ENCODE measurements at regions of chr19 and their contacts with region 1.

Region 1: GRCh38 chr19:42176990-42177685 is 40.3 kb downstream of the DEDD2 start:
- DNase-seq: peak; percentile 81
- H3K4me3 Mint-ChIP-seq: no peak overlapping the region
- H3K27ac Mint-ChIP-seq: no peak overlapping the region
- H3K4me1 Mint-ChIP-seq: peaks cover 19% of the 10 kb centered on the region
- H3K27me3 Mint-ChIP-seq: peaks cover 30% of the 10 kb centered on the region

Region 2: GRCh38 chr19:42023121-42023942 is 153.8 kb before region 1 on chr19:
- CTCF ChIA-PET with region 1: no interaction called
- POLR2A ChIA-PET with region 1: no interaction called
- DNase-seq: peak; percentile 33
- H3K4me3 Mint-ChIP-seq: no peak overlapping the region
- H3K27ac Mint-ChIP-seq: no peak overlapping the region
- H3K4me1 Mint-ChIP-seq: no peaks in the 10 kb centered on the region
- H3K27me3 Mint-ChIP-seq: peaks cover 6% of the 10 kb centered on the region

Region 3: DNA sequence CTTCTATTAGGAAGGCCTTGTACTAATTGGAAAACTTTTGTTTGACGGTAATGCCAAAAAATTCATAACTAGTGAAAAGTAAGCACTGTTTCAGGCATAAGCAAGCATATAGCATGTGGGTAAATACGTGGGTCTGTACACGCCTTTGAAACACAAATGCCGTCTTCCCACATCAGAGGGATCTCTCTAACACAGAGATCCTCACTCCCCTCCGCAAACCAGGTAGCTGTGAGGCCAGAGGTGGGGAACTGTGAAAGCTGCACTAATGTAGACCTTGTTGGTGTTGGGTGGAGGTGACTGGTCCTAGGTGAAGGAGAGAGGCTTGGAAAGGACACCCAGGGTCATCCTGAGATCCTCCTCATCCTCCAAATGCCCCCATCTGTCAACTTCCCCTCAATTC is 28.9 kb before region 1 on chr19:
- CTCF ChIA-PET with region 1: no interaction called
- POLR2A ChIA-PET with region 1: no interaction called
- DNase-seq: no peak
- H3K4me3 Mint-ChIP-seq: no peak overlapping the region
- H3K27ac Mint-ChIP-seq: no peak overlapping the region
- H3K4me1 Mint-ChIP-seq: peaks cover 3% of the 10 kb centered on the region
- H3K27me3 Mint-ChIP-seq: peaks cover 15% of the 10 kb centered on the region

Region 4: DNA sequence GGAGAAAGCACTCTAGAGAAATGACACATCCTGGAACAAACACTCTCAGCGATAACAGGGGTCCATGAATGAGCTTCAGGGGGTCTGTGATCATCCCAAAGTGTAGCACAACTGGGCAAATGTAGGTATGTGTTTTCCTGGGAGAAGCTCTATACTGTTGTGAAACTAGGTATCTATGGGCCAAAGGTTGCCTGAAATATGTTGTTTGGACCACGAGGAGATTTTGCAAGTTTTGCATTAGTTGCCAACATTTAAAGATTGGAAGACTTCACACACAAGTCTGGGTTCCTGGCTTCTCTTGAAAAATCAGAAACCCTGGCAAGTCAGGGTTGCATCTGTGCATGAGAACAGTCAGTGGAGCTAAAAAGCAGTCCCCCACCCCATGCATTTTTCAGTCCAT is 18.2 kb before region 1 on chr19:
- CTCF ChIA-PET with region 1: interaction called, 11 read pairs
- POLR2A ChIA-PET with region 1: no interaction called
- DNase-seq: no peak
- H3K4me3 Mint-ChIP-seq: no peak overlapping the region
- H3K27ac Mint-ChIP-seq: no peak overlapping the region
- H3K4me1 Mint-ChIP-seq: peaks cover 13% of the 10 kb centered on the region
- H3K27me3 Mint-ChIP-seq: peaks cover 13% of the 10 kb centered on the region

Region 5: GRCh38 chr19:42166316-42166715 is 10.8 kb before region 1 on chr19:
- CTCF ChIA-PET with region 1: interaction called, 10 read pairs
- POLR2A ChIA-PET with region 1: interaction called, 3 read pairs
- DNase-seq: no peak
- H3K4me3 Mint-ChIP-seq: no peak overlapping the region
- H3K27ac Mint-ChIP-seq: no peak overlapping the region
- H3K4me1 Mint-ChIP-seq: peaks cover 1% of the 10 kb centered on the region
- H3K27me3 Mint-ChIP-seq: peaks cover 6% of the 10 kb centered on the region

Measured in activated CD4-positive, alpha-beta memory T cell treated with anti-CD3 and anti-CD28 coated beads, Interleukin-2, amount 10 ng/mL, durations not matched to agents 7 days and 5 days (primary cell).